ENCODE measurements at regions of chr2 and their contacts with region 1.

Region 1: GRCh38 chr2:235106874-235107639 is 155.2 kb downstream of the SH3BP4 start:
- DNase-seq: peak; percentile 84
- H3K4me3 ChIP-seq: no peak overlapping the region; a peak in 1 of 4 replicates
- H3K27ac ChIP-seq: no peak overlapping the region
- H3K4me1 ChIP-seq: peaks cover 0 to 2% of the 10 kb centered on the region in 2 experiments; a peak in 1 of 4 replicates
- H3K27me3 ChIP-seq: no peaks in the 10 kb centered on the region
- CTCF ChIP-seq: peak; percentile 79
- EP300 ChIP-seq: 0 out of 4 replicates have a peak, but pooled peaks of 1 of the 2 experiments have one; percentile 14
- RAD21 ChIP-seq: peak; percentile 98

Region 2: GRCh38 chr2:234550511-234551107 is 556.4 kb before region 1 on chr2:
- CTCF ChIA-PET with region 1: interaction called, 262 read pairs
- POLR2A ChIA-PET with region 1: no interaction called
- DNase-seq: peak; percentile 84
- H3K4me3 ChIP-seq: no peak overlapping the region; a peak in 1 of 4 replicates
- H3K27ac ChIP-seq: no peak overlapping the region
- H3K4me1 ChIP-seq: peaks cover 0 to 6% of the 10 kb centered on the region in 2 experiments; a peak in 1 of 4 replicates
- H3K27me3 ChIP-seq: no peaks in the 10 kb centered on the region
- CTCF ChIP-seq: peak; percentile 94
- EP300 ChIP-seq: no peak
- RAD21 ChIP-seq: peak; percentile 99

Region 3: DNA sequence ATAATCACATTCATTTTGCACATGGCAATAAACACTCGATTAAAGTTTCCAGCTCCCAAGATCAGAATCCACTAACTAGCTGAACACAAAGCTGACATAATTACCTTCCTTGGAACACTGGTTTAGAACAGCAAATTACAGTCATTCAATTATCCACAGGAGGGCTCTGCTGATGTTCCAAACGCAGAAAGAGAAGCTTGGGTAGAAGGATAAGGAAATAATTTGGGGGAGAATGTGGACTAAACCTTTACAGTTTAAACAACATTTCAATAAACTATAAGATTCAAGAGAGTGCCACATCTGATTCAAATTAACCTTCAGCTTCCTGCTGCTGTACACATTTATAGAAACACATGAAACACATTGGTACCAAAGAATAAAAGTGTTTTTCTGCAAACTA is 542.4 kb before region 1 on chr2:
- CTCF ChIA-PET with region 1: interaction called, 33 read pairs
- POLR2A ChIA-PET with region 1: no interaction called
- DNase-seq: peak; percentile 55
- H3K4me3 ChIP-seq: no peak overlapping the region
- H3K27ac ChIP-seq: peak overlapping the region in 1 of 2 experiments; percentile 86; a peak in 2 of 4 replicates
- H3K4me1 ChIP-seq: peaks cover 0 to 9% of the 10 kb centered on the region in 2 experiments; a peak in 3 of 4 replicates
- H3K27me3 ChIP-seq: no peaks in the 10 kb centered on the region
- CTCF ChIP-seq: peak; percentile 48
- EP300 ChIP-seq: no peak
- RAD21 ChIP-seq: peak; percentile 75

Region 4: GRCh38 chr2:234751275-234751973 is 355.6 kb before region 1 on chr2:
- CTCF ChIA-PET with region 1: interaction called, 16 read pairs
- POLR2A ChIA-PET with region 1: no interaction called
- DNase-seq: no peak
- H3K4me3 ChIP-seq: no peak overlapping the region
- H3K27ac ChIP-seq: no peak overlapping the region
- H3K4me1 ChIP-seq: peaks cover 0 to 4% of the 10 kb centered on the region in 2 experiments; a peak in 1 of 4 replicates
- H3K27me3 ChIP-seq: no peaks in the 10 kb centered on the region
- CTCF ChIP-seq: no peak
- EP300 ChIP-seq: no peak
- RAD21 ChIP-seq: peak; percentile 53

Region 5: DNA sequence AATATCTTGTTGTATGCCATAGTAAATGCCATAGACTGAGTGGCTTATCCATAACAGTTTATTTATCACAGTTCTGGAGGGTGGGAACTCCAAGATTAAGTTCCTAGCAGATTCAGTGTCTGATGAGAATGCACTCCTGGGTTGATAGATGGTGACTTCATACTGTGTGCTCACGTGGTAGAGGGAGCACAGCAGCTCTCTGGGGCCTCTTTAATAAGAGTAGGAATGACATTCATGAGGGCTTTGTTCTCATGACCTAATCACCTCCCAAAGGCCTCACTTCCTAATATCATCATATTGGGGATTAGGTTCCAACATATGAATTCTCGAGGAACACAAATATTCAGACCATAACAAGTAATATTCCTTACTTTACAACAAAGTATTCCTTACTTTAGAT is 253.3 kb before region 1 on chr2:
- CTCF ChIA-PET with region 1: no interaction called
- POLR2A ChIA-PET with region 1: no interaction called
- DNase-seq: no peak
- H3K4me3 ChIP-seq: no peak overlapping the region
- H3K27ac ChIP-seq: no peak overlapping the region
- H3K4me1 ChIP-seq: no peaks in the 10 kb centered on the region; a peak in 1 of 4 replicates
- H3K27me3 ChIP-seq: no peaks in the 10 kb centered on the region
- CTCF ChIP-seq: no peak
- EP300 ChIP-seq: no peak
- RAD21 ChIP-seq: no peak

Region 6: DNA sequence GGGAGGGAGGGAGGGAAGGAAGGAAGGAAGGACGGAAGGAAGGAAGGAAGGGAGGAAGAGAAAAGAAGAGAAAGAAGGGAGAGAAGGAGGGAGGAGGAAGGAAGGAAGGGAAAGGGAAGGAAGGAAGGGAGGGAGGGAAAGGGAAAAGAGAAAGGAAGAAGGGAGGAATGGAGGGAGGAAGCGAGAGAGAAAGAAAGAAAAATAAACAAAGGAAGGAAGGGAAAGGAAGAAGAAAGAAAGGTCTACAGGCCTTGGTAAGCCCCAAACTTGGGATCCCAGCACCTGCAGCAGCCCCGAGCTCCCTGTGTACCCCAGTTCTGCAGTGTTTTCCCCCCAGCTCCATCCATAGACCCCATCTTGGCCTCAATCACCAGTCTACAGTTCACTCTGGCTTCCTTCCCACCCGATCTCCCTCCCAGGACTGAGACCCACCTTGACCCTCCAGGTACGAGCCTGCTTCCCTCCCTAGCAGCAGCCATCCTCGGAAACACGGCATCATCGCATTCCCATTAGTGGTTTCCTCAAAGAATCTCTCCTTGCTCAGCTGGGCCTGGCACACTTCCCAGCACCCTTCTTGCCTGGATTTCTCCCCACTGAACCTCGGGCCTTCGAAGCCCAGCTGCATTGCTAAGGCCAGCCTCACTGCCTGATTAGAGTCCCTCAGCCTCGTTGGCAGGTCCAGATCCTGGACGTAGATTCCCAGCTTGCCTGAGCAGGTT is 201.4 kb before region 1 on chr2:
- CTCF ChIA-PET with region 1: no interaction called
- POLR2A ChIA-PET with region 1: no interaction called
- DNase-seq: no peak
- H3K4me3 ChIP-seq: no peak overlapping the region
- H3K27ac ChIP-seq: no peak overlapping the region
- H3K4me1 ChIP-seq: peaks cover 0 to 5% of the 10 kb centered on the region in 2 experiments; a peak in 2 of 4 replicates
- H3K27me3 ChIP-seq: no peaks in the 10 kb centered on the region
- CTCF ChIP-seq: no peak
- EP300 ChIP-seq: no peak
- RAD21 ChIP-seq: no peak

Region 7: DNA sequence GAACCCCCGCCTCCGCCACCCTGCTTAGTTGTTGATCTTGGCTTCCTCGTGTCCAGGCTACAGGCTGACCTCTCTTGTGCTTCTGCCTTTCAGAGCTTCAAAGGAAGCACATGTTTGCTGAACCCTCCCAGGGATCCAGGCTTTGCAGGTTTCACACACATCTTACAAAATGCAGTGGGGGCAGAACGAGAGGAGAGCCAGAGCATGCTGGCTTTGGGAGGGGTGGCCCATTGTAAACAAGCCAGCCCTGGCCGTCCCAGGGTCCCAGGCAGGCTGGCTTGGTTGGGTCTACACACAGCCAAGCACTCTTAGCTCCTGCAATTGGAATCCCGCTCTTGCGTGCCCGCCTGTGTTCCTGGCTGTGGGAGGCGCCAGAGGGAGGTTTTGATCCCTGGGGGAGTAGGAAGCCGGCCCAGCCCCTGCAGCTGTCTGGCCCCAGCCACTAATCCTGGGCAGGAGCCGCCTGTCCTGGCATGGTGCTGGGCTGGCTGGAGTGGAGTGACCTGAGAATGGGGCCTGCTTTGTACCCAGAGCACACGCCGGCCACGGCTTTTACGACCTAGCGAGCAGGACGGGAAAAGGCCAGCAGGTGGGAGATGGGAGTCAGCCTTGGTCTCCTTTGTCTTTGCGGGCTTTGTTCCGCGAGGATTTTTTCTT is 101.3 kb before region 1 on chr2:
- CTCF ChIA-PET with region 1: interaction called, 13 read pairs
- POLR2A ChIA-PET with region 1: no interaction called
- DNase-seq: peak; percentile 70
- H3K4me3 ChIP-seq: no peak overlapping the region
- H3K27ac ChIP-seq: no peak overlapping the region; a peak in 1 of 4 replicates
- H3K4me1 ChIP-seq: peaks cover 0 to 55% of the 10 kb centered on the region in 2 experiments; a peak in 2 of 4 replicates
- H3K27me3 ChIP-seq: no peaks in the 10 kb centered on the region
- CTCF ChIP-seq: no peak
- EP300 ChIP-seq: no peak
- RAD21 ChIP-seq: peak; percentile 26

Region 8: DNA sequence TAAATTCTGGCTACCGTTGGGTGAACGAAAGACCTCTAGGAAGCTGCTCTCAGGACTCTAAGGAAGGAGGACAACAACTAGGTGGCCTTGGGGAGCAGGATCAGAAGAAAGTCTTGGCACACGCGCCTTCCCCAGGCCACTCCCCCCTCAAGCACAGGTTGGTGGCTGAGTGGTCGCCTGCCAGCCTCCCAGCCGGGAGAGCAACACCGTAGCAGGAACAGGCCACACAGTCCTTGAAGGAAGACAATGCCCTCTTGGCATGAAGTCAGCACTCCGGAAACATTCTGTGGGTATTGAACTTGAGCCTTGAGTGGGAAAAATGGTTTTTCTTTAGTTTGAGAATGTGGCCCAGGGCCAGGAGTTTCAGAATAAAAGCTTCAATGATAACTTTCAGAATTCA is 299.4 kb after region 1 on chr2:
- CTCF ChIA-PET with region 1: no interaction called
- POLR2A ChIA-PET with region 1: no interaction called
- DNase-seq: no peak
- H3K4me3 ChIP-seq: no peak overlapping the region
- H3K27ac ChIP-seq: no peak overlapping the region
- H3K4me1 ChIP-seq: no peaks in the 10 kb centered on the region
- H3K27me3 ChIP-seq: no peaks in the 10 kb centered on the region; the same call in 1 of the 2 replicates
- CTCF ChIP-seq: no peak
- EP300 ChIP-seq: no peak
- RAD21 ChIP-seq: no peak